Activated CD4-positive, alpha-beta memory T cell treated with anti-CD3 and anti-CD28 coated beads, Interleukin-2, amount 10 ng/mL, durations not matched to agents 7 days and 5 days (primary cell): ENCODE measurements at regions of chr17 and their contacts with region 1.

Region 1: DNA sequence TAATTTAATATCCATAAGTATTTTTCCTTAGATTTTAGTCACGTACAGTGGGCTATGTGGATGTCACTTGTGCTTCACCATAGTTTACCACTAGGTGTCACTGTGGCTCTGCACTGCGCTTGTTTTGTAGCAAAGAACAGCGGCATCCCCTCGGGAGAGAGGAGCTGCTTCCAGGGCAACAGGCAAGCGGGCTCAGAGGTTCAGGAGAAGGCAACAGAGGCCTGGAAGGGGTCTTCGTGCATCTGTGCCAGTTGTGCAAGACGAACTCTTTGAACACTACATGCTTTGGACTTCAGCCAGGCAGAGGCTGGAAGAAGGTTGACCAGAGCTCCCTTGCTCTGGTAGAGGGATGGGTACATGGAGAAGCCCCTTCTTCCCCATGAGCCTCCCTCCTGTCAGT is 20.6 kb downstream of the CYB561 start:
- DNase-seq: peak; percentile 79
- H3K4me3 Mint-ChIP-seq: no peak overlapping the region
- H3K27ac Mint-ChIP-seq: no peak overlapping the region
- H3K4me1 Mint-ChIP-seq: peaks cover 50% of the 10 kb centered on the region
- H3K27me3 Mint-ChIP-seq: no peaks in the 10 kb centered on the region

Region 2: DNA sequence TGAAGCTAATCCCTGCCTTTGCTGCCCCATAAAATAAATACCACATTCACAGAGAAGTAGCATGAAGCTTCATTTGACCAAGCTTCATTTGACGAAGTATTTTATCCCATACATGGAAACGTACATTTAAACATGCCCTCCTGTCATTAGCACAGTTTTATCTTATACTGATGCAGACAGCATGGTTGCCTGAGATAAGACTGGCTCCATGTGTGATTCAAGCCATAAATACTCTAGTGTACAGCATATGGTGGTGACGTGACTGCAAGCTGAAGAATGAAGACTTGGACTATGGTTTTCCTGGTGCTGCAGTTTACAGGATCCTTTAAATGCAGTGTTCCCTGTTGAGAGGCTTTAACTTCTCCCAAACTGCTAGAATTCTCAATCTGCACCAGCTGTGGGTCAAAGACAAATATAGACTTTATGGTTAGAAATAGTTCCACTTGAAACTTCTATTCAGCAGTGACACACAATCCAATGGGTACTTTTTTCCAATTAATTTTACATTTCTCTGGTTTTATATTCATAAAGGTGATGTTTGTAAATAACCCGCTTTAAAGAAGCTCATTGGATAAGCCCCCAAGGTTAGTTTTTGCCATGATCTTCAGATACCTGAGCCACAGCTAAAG is 44.3 kb before region 1 on chr17:
- CTCF ChIA-PET with region 1: no interaction called
- POLR2A ChIA-PET with region 1: no interaction called
- DNase-seq: no peak
- H3K4me3 Mint-ChIP-seq: no peak overlapping the region
- H3K27ac Mint-ChIP-seq: no peak overlapping the region
- H3K4me1 Mint-ChIP-seq: no peaks in the 10 kb centered on the region
- H3K27me3 Mint-ChIP-seq: no peaks in the 10 kb centered on the region

Region 3: DNA sequence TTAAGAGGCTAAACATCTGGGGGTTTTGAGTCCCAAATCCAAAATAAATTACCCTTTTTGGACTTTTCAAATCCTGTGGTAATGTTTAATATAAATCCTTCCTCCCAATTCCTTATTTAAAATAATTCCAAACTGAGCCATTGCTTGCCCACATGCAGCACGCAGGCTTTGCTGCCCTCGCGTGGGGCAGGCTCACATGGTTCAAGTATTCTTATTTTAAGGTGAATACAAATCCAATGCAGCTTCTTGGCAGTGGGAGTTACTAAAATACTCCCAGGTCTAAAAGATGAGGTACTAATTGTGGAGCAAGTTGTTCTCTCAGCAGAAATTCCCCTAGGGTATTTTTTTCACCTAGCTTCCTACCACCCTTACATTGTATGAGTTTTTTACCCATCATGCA is 12.4 kb before region 1 on chr17:
- CTCF ChIA-PET with region 1: interaction called, 10 read pairs
- POLR2A ChIA-PET with region 1: no interaction called
- DNase-seq: no peak
- H3K4me3 Mint-ChIP-seq: no peak overlapping the region
- H3K27ac Mint-ChIP-seq: no peak overlapping the region
- H3K4me1 Mint-ChIP-seq: no peaks in the 10 kb centered on the region
- H3K27me3 Mint-ChIP-seq: no peaks in the 10 kb centered on the region

Region 4: GRCh38 chr17:63445979-63446691 is 20.7 kb after region 1 on chr17 and contains the start of gene CYB561:
- CTCF ChIA-PET with region 1: interaction called, 25 read pairs
- POLR2A ChIA-PET with region 1: interaction called, 4 read pairs
- DNase-seq: peak; percentile 74
- H3K4me3 Mint-ChIP-seq: peak within 1 kb of the TSS; percentile 64
- H3K27ac Mint-ChIP-seq: peak within 1 kb of the TSS; percentile 69
- H3K4me1 Mint-ChIP-seq: peaks cover 46% of the 10 kb centered on the region
- H3K27me3 Mint-ChIP-seq: peaks cover 3% of the 10 kb centered on the region
- total RNA-seq, gene CYB561: 28.9 to 30.3 TPM

Region 5: GRCh38 chr17:63478791-63479494 is 53.5 kb after region 1 on chr17:
- CTCF ChIA-PET with region 1: interaction called, 174 read pairs
- POLR2A ChIA-PET with region 1: interaction called, 27 read pairs
- DNase-seq: peak; percentile 84
- H3K4me3 Mint-ChIP-seq: peak overlapping the region; percentile 74
- H3K27ac Mint-ChIP-seq: no peak overlapping the region
- H3K4me1 Mint-ChIP-seq: peaks cover 16% of the 10 kb centered on the region
- H3K27me3 Mint-ChIP-seq: peaks cover 33% of the 10 kb centered on the region

Region 6: DNA sequence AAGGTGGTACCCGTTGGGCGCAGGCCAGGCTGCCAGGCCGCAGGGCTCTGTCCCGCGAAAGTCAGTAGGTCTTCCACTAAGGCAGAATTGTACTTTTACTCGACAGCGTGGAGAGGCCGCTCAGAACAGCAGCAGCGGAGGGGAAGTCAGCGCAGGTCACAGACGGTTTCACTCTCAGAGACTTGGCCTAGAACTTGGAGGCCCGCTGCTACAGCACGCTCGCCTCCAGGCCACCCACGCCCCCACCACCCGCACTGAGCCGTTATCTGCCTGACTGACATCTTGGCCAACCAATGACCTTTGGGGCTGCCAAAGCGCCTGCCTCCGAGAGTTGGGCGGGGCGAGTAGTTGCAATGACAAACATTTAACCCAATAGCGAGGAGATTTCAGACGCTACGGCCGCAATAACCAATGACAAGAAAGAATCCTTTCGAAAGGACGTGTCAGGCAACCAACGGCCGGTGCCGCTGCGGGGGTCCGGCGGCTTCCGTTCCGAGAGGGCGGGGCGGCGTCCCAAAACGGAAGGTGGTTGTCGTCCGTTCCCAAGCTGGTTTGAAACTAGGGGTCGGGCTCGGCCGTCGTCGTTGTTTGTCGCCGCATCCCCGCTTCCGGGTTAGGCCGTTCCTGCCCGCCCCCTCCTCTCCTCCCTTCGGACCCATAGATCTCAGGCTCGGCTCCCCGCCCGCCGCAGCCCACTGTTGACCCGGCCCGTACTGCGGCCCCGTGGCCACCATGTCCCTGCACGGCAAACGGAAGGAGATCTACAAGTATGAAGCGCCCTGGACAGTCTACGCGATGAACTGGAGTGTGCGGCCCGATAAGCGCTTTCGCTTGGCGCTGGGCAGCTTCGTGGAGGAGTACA is 124.7 kb after region 1 on chr17 and contains the start of gene DCAF7:
- CTCF ChIA-PET with region 1: interaction called, 19 read pairs
- POLR2A ChIA-PET with region 1: interaction called, 6 read pairs
- DNase-seq: peak; percentile 100
- H3K4me3 Mint-ChIP-seq: peak within 1 kb of the TSS; percentile 86
- H3K27ac Mint-ChIP-seq: peak within 1 kb of the TSS; percentile 96
- H3K4me1 Mint-ChIP-seq: peaks cover 32% of the 10 kb centered on the region
- H3K27me3 Mint-ChIP-seq: no peaks in the 10 kb centered on the region
- total RNA-seq, gene DCAF7: 138 to 139 TPM